Activated CD4-positive, alpha-beta T cell treated with anti-CD3 and anti-CD28 coated beads, Interleukin-2, amount 10 ng/mL, durations not matched to agents 24 days and 14 days (primary cell): ENCODE measurements at regions of chr16 and their contacts with region 1.

Region 1: GRCh38 chr16:88700636-88701482 is 5.3 kb downstream of the RNF166 start:
- DNase-seq: peak; percentile 98
- H3K4me3 Mint-ChIP-seq: peak overlapping the region; percentile 81
- H3K27ac Mint-ChIP-seq: peak overlapping the region; percentile 95
- H3K4me1 Mint-ChIP-seq: peaks cover 50% of the 10 kb centered on the region
- H3K27me3 Mint-ChIP-seq: no peaks in the 10 kb centered on the region

Region 2: GRCh38 chr16:88639231-88640038 is 61.4 kb before region 1 on chr16:
- intact Hi-C with region 1: loop called (anchors 5 kb)
- DNase-seq: peak; percentile 67
- H3K4me3 Mint-ChIP-seq: no peak overlapping the region
- H3K27ac Mint-ChIP-seq: no peak overlapping the region
- H3K4me1 Mint-ChIP-seq: peaks cover 21% of the 10 kb centered on the region
- H3K27me3 Mint-ChIP-seq: peaks cover 25% of the 10 kb centered on the region

Region 3: DNA sequence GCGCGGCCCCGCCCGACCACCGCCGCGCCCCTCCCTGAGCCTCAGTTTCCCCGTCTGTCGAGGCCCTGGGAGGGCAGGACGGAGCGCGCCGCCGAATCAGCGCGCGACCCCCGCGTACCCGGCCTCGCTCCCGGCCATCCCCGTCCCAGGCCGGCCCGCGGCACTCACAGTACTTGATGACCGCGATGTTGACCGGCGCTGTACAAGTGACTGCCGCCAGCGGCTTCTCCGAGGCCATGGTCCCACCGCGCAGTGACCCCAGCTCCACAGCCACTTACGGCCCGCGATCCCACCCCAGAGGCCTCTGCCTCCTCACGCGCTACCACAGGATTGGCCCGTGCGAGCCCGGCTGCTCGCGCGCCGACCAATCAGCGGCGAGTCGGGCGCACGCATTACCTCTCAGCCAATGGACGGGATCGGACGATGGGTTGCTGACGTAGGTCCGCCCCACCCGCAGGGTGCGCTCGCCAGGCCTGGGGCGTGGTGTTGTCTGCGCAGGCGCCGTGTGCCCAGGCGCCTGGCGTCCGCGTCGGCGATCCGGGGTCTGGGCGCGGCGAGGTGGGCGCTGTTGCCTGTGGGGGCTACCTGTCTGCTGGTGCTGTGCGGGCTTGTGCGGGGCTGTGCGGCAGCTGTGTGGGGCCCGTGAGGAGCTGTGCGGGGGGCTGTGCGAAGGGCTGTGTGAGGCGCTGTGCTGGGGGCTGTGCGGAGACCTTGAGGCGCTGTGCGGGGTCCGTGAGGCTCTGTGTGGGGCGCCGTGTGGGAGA is 37.8 kb before region 1 on chr16 and contains the start of gene MVD:
- intact Hi-C with region 1: loop called (anchors 2 kb)
- DNase-seq: peak; percentile 99
- H3K4me3 Mint-ChIP-seq: peak within 1 kb of the TSS; percentile 97
- H3K27ac Mint-ChIP-seq: peak within 1 kb of the TSS; percentile 93
- H3K4me1 Mint-ChIP-seq: peaks cover 23% of the 10 kb centered on the region
- H3K27me3 Mint-ChIP-seq: no peaks in the 10 kb centered on the region
- total RNA-seq, gene MVD: 95.7 and 102 TPM in 2 replicates

Region 4: DNA sequence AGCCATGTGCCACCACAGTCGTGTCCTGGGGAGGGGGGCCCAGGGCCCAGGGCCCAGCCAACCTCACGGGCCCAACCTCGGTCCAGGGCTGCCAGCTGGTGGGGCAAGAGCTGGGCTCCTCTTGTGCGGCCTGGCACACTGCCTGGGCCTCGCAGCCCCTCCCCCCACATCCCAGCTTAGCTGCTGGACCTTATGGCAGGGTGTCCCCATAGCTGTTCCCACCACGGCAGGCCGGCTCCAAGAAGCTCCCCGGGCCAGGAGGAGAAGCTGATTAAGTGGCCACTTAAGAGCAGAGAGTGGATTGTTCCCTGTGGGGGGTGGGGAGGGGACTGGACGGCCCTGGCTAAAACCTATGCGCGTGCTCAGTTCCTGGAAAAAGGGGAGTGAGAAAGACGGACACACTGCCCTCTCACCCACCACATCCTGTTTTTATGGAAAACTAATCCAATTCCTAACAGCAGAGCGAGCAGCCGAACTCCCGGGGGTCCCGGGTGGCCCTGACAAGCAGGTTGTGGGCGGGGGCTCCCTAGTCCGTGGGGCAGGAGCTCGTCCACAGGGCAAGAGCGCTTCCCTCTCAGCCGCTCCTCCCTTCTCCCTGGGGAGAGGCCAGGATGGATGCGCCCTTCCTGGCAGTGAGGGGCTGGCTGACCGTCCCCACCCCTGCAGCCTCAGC is 67.4 kb after region 1 on chr16:
- intact Hi-C with region 1: no loop called
- DNase-seq: no peak
- H3K4me3 Mint-ChIP-seq: no peak overlapping the region
- H3K27ac Mint-ChIP-seq: no peak overlapping the region
- H3K4me1 Mint-ChIP-seq: peaks cover 10% of the 10 kb centered on the region
- H3K27me3 Mint-ChIP-seq: no peaks in the 10 kb centered on the region